Heart left ventricle (tissue), 16 donors: ENCODE measurements at regions of chr14 and their contacts with region 1.

Region 1: DNA sequence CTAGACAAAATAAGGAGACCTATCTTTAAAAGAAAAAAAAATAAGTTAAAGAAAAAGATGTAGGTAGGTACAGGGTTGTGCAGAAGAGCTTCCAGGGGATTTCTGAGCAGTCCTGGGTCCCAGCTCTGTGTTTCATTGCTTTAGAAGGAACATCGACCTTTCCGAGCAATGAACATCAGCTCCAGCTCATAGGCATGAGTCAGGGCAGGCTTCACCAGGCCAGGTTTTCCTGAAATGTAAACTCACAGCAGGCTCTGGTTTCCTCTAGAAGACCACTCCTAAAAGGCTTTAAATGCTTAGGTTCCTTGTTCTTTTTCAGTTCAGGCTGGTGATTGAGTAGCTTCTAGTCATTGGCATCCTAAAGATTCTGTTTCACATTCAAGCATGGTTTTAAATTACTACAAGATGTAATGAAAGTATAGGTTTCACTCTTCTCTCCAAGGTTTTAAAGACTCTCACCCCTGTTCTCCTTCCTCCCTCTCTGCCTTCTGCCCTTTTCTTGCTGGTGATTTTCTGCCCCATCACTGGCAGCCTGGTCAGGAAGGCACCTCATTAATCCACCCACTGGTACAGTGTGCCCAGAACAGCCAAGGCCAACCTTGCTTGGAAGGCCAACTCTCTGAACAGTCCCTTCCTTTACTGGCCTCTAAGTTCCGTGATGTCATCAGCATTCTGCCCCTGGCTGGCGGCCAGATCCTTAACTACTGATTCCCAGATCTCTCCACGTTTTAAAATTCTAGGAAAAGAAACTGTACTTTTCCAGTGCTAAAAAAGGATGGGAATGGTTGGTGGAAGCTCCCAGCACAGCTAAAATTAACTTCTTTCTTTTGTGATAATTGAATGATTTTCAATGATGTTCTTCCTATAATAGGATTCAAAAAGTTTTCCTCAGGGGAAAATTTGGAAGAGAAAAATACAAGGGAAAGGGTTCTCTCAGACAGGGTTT is 109.4 kb upstream of the HIF1A start:
- DNase-seq: peak; percentile 78 to 84 (median 81)
- ATAC-seq: peak; percentile 83 to 89 (median 86)
- H3K4me3 ChIP-seq: no peak overlapping the region
- H3K27ac ChIP-seq: peak overlapping the region; percentile 49 to 88 (median 65)
- H3K4me1 ChIP-seq: peaks cover 8 to 71% (median 32%) of the 10 kb centered on the region in 12 donors
- H3K27me3 ChIP-seq: no peaks in the 10 kb centered on the region
- CTCF ChIP-seq: no peak
- POLR2A ChIP-seq: no peak

Region 2: DNA sequence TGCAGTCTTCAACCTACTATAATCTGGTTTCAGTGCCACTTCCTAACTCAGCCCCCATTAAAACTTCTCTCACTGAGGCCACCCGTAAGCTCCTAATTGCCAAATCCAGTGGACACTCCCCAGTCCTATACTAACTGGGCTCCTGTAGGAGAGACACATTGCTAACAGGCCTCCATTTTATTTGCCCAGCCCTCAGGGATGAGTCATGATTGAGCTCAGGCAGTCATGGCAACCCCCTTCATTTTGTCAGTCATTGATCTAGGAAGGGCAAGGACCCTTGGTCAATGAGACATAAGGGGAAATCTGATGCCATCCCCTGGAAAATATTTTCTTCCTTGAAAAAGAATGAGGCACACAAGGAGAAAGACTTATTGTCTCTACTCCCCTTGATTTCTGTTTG is 39.3 kb after region 1 on chr14:
- intact Hi-C with region 1: no loop called
- DNase-seq: no peak
- ATAC-seq: no peak
- H3K4me3 ChIP-seq: no peak overlapping the region
- H3K27ac ChIP-seq: no peak overlapping the region
- H3K4me1 ChIP-seq: peaks cover 0 to 9% (median 0%) of the 10 kb centered on the region in 12 donors
- H3K27me3 ChIP-seq: no peaks in the 10 kb centered on the region
- CTCF ChIP-seq: no peak
- POLR2A ChIP-seq: no peak

Region 3: GRCh38 chr14:61653507-61653906 is 67.6 kb after region 1 on chr14:
- intact Hi-C with region 1: loop called in 1 of 10 experiments (anchors 5 kb)
- DNase-seq: peak in 3 of 5 donors; percentile 32 to 60 (median 51)
- ATAC-seq: peak in 2 of 4 donors; percentile 50 to 93
- H3K4me3 ChIP-seq: no peak overlapping the region
- H3K27ac ChIP-seq: peak overlapping the region in 1 of 12 donors; percentile 43
- H3K4me1 ChIP-seq: peaks cover 0 to 18% (median 8%) of the 10 kb centered on the region in 12 donors
- H3K27me3 ChIP-seq: no peaks in the 10 kb centered on the region
- CTCF ChIP-seq: no peak
- POLR2A ChIP-seq: no peak